Activated CD4-positive, alpha-beta T cell treated with anti-CD3 and anti-CD28 coated beads for 36 hours (primary cell): ENCODE measurements at regions of chr12 and their contacts with region 1.

Region 1: DNA sequence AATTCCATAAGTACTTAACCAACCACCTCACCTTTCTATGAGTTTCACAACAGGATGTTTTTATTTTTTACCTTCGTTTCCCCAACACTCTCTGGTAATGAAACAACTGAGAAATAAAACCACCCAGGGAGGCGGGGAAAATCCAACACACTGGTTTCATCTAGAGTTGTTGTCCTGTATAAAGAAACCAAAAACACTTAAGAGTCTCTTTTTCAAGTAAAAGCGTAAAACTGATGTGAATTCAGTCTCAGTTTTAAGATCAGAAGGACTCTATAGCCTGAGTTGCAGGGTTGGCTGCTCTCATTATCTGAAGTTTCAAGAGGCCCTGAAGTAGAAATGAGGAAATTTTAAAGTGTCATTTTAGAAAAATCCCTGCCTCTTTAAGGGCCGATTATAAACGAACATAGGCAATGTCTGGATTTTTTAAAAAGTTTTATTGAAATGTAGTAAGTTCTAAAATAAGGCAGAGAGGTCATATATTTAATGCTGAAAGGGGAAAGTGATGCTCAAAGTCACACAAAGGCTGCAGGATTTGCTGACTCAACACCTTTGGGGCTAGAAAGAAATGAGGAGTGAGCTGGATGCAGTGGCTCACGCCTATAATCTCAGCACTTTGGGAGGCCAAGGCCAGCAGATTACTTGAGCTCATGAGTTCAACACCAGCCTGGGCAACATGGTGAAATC is 27.2 kb downstream of the HIGD1C start:
- DNase-seq: peak; percentile 75
- ATAC-seq: peak; percentile 89
- H3K4me3 Mint-ChIP-seq: peak overlapping the region; percentile 39
- H3K27ac Mint-ChIP-seq: peak overlapping the region; percentile 94
- H3K4me1 Mint-ChIP-seq: peaks cover 30% of the 10 kb centered on the region
- H3K27me3 Mint-ChIP-seq: no peaks in the 10 kb centered on the region

Region 2: DNA sequence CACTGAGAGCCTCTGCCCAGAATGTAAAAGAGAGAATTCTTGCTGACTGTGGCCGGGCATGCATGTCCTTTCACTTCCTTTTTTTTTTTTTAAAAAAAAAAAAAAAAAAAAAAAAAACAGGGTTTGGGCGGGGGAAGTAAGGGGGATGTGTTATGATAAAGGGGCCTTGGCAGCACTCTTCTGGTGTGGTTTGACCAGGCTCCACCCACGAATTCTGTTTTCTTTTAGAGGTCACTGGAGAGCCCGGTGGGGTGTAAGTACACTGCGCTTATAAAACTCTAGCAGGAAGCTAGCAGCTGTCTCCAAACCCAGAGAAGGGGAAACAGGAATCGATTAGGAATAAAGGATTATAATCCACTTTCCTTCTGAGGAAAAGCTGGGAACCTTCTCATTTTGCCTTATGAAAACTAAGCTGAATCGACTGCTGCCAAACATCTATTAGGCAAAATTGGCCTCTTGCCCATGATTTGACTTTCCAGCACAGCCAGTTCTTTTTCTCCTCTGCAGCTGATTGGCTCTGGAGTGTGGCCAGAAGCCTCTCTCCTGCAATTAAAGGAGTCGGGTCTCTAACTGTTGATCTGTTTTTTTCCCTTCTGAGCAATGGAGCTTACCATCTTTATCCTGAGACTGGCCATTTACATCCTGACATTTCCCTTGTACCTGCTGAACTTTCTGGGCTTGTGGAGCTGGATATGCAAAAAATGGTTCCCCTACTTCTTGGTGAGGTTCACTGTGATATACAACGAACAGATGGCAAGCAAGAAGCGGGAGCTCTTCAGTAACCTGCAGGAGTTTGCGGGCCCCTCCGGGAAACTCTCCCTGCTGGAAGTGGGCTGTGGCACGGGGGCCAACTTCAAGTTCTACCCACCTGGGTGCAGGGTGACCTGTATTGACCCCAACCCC is 54.8 kb before region 1 on chr12:
- CTCF ChIA-PET with region 1: interaction called, 3 read pairs
- POLR2A ChIA-PET with region 1: no interaction called
- intact Hi-C with region 1: loop called in 1 of 2 experiments (anchors 2 kb)
- DNase-seq: peak; percentile 17
- ATAC-seq: peak; percentile 58
- H3K4me3 Mint-ChIP-seq: peak overlapping the region; percentile 41
- H3K27ac Mint-ChIP-seq: peak overlapping the region; percentile 33
- H3K4me1 Mint-ChIP-seq: peaks cover 18% of the 10 kb centered on the region
- H3K27me3 Mint-ChIP-seq: peaks cover 2% of the 10 kb centered on the region